ENCODE measurements at regions of chr11 and their contacts with region 1.

Region 1: GRCh38 chr11:34174412-34175041 is 69.1 kb downstream of the NAT10 start:
- DNase-seq: no peak
- ATAC-seq: peak; percentile 98
- H3K4me3 ChIP-seq: no peak overlapping the region
- H3K27ac ChIP-seq: no peak overlapping the region
- H3K4me1 ChIP-seq: peaks cover 19% of the 10 kb centered on the region
- H3K27me3 ChIP-seq: no peaks in the 10 kb centered on the region
- CTCF ChIP-seq: peak; percentile 89 to 99 (median 95)
- EP300 ChIP-seq: no peak
- POLR2A ChIP-seq: no peak
- RAD21 ChIP-seq: peak; percentile 98

Region 2: GRCh38 chr11:34149786-34150185 is 24.7 kb before region 1 on chr11:
- CTCF ChIA-PET with region 1: interaction called, 14 read pairs
- POLR2A ChIA-PET with region 1: interaction called, 3 read pairs
- RAD21 ChIA-PET with region 1: interaction called, 7 read pairs
- SMC1A ChIA-PET with region 1: interaction called, 5 read pairs
- in situ Hi-C with region 1: no loop called
- intact Hi-C with region 1: no loop called
- DNase-seq: no peak
- ATAC-seq: no peak
- H3K4me3 ChIP-seq: no peak overlapping the region
- H3K27ac ChIP-seq: no peak overlapping the region
- H3K4me1 ChIP-seq: peaks cover 42% of the 10 kb centered on the region
- H3K27me3 ChIP-seq: no peaks in the 10 kb centered on the region
- CTCF ChIP-seq: peak in 2 of 3 experiments; percentile 25 to 27; a peak in 2 of 6 replicates
- EP300 ChIP-seq: no peak
- POLR2A ChIP-seq: no peak
- RAD21 ChIP-seq: 0 out of 2 replicates have a peak, but pooled peaks have one; percentile 24

Region 3: GRCh38 chr11:34223021-34223813 is 48.7 kb after region 1 on chr11:
- CTCF ChIA-PET with region 1: interaction called, 19 read pairs
- POLR2A ChIA-PET with region 1: no interaction called
- RAD21 ChIA-PET with region 1: interaction called, 10 read pairs
- SMC1A ChIA-PET with region 1: interaction called, 6 read pairs
- in situ Hi-C with region 1: no loop called
- intact Hi-C with region 1: no loop called
- DNase-seq: no peak
- ATAC-seq: no peak
- H3K4me3 ChIP-seq: no peak overlapping the region
- H3K27ac ChIP-seq: no peak overlapping the region
- H3K4me1 ChIP-seq: no peaks in the 10 kb centered on the region
- H3K27me3 ChIP-seq: no peaks in the 10 kb centered on the region; a peak in 1 of 4 replicates
- CTCF ChIP-seq: no peak
- EP300 ChIP-seq: no peak
- POLR2A ChIP-seq: no peak
- RAD21 ChIP-seq: no peak

Region 4: GRCh38 chr11:34250732-34251639 is 76.5 kb after region 1 on chr11:
- CTCF ChIA-PET with region 1: interaction called, 30 read pairs
- POLR2A ChIA-PET with region 1: interaction called, 5 read pairs
- RAD21 ChIA-PET with region 1: interaction called, 8 read pairs
- SMC1A ChIA-PET with region 1: interaction called, 192 read pairs
- in situ Hi-C with region 1: no loop called
- intact Hi-C with region 1: no loop called
- DNase-seq: no peak
- ATAC-seq: peak; percentile 86
- H3K4me3 ChIP-seq: no peak overlapping the region
- H3K27ac ChIP-seq: no peak overlapping the region
- H3K4me1 ChIP-seq: peaks cover 16% of the 10 kb centered on the region
- H3K27me3 ChIP-seq: no peaks in the 10 kb centered on the region
- CTCF ChIP-seq: no peak
- EP300 ChIP-seq: no peak
- POLR2A ChIP-seq: no peak
- RAD21 ChIP-seq: no peak

Region 5: GRCh38 chr11:34357701-34358257 is 183.3 kb after region 1 on chr11 and contains the start of gene ABTB2:
- CTCF ChIA-PET with region 1: interaction called, 167 read pairs
- POLR2A ChIA-PET with region 1: interaction called, 6 read pairs
- RAD21 ChIA-PET with region 1: interaction called, 249 read pairs
- SMC1A ChIA-PET with region 1: interaction called, 171 read pairs
- in situ Hi-C with region 1: loop called (anchors 5 kb)
- intact Hi-C with region 1: loop called (anchors 1 kb)
- DNase-seq: peak; percentile 64
- ATAC-seq: peak; percentile 92
- H3K4me3 ChIP-seq: peak within 1 kb of the TSS; percentile 84
- H3K27ac ChIP-seq: peak within 1 kb of the TSS; percentile 13; the same call in 1 of the 2 replicates
- H3K4me1 ChIP-seq: peaks cover 5% of the 10 kb centered on the region
- H3K27me3 ChIP-seq: peaks cover 0 to 3% of the 10 kb centered on the region in 2 experiments; a peak in 2 of 4 replicates
- CTCF ChIP-seq: no peak
- EP300 ChIP-seq: no peak
- POLR2A ChIP-seq: peak; percentile 99
- RAD21 ChIP-seq: no peak
- polyA plus RNA-seq, gene ABTB2: 0.13 to 0.16 TPM

Region 6: GRCh38 chr11:34492806-34493414 is 318.4 kb after region 1 on chr11:
- CTCF ChIA-PET with region 1: interaction called, 5 read pairs
- POLR2A ChIA-PET with region 1: no interaction called
- RAD21 ChIA-PET with region 1: interaction called, 3 read pairs
- SMC1A ChIA-PET with region 1: interaction called, 3 read pairs
- in situ Hi-C with region 1: loop called (anchors 25 kb)
- intact Hi-C with region 1: no loop called
- DNase-seq: no peak
- ATAC-seq: peak; percentile 77
- H3K4me3 ChIP-seq: no peak overlapping the region
- H3K27ac ChIP-seq: no peak overlapping the region
- H3K4me1 ChIP-seq: peaks cover 4% of the 10 kb centered on the region; the same call in 1 of the 2 replicates
- H3K27me3 ChIP-seq: no peaks in the 10 kb centered on the region; a peak in 2 of 4 replicates
- CTCF ChIP-seq: peak; percentile 54 to 81 (median 64); a peak in 5 of 6 replicates
- EP300 ChIP-seq: no peak
- POLR2A ChIP-seq: no peak
- RAD21 ChIP-seq: peak; percentile 82